GM12878 (cell line): ENCODE measurements at regions of chr17 and their contacts with region 1.

Region 1: DNA sequence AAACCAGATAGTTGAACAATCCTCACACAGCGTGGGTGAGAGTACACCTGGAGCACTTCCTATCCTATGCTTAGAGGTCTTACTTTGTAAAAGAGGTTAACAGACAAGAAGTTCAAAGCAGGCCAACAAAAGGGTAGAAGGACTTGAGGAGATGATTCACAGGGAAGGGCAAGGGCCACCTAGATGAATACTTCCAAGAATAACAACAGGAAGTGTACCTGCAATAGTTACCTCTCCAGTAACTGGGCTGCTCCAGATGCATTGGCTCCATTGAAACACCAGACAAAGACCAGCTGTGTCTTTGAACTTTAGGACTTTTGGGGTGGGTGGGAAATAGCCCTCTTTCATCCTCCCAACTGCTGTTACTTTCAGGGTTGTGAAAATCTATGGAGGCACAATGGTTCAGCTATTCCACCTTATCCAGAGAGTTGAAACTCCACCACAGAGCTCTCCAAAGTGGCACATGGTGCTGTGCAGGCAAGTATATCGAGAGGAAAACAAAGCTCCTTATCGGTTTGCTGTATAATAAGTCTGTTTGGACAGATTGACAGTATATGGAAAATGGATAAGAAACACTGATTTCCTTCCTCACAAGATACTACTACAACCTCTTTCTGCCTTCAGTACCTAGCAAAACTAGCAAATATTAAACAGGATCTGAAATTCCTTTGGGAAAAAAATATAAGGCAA is 22.7 kb downstream of the RNF43 start:
- DNase-seq: no peak
- ATAC-seq: no peak
- H3K4me3 ChIP-seq: no peak overlapping the region
- H3K27ac ChIP-seq: no peak overlapping the region
- H3K4me1 ChIP-seq: no peaks in the 10 kb centered on the region
- H3K27me3 ChIP-seq: no peaks in the 10 kb centered on the region
- CTCF ChIP-seq: no peak
- EP300 ChIP-seq: no peak
- POLR2A ChIP-seq: no peak
- RAD21 ChIP-seq: no peak

Region 2: DNA sequence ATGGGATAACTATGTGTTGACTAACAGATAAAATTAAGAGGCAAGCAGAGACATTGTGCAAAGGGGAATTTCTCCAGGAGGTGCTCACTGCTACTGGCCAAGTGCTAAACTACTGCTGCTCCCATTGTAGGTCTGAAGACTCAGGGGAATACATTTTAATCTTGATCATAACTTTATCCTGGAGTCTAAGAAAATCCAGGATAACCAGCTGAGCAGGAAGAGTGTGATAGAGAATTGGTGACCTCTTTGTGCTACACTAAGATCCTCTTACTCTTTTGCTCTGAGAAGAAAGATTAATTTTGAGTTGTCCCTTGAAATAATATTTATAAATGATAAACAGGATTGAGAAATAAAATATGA is 16.7 kb after region 1 on chr17:
- CTCF ChIA-PET with region 1: interaction called, 4 read pairs
- POLR2A ChIA-PET with region 1: interaction called, 8 read pairs
- RAD21 ChIA-PET with region 1: interaction called, 4 read pairs
- SMC1A ChIA-PET with region 1: interaction called, 14 read pairs
- in situ Hi-C with region 1: no loop called
- intact Hi-C with region 1: no loop called
- DNase-seq: no peak
- ATAC-seq: peak; percentile 11; the same call in 2 of the 3 replicates
- H3K4me3 ChIP-seq: peak overlapping the region; percentile 57
- H3K27ac ChIP-seq: peak overlapping the region; percentile 48
- H3K4me1 ChIP-seq: no peaks in the 10 kb centered on the region
- H3K27me3 ChIP-seq: no peaks in the 10 kb centered on the region; a peak in 1 of 4 replicates
- CTCF ChIP-seq: no peak
- EP300 ChIP-seq: no peak
- POLR2A ChIP-seq: no peak
- RAD21 ChIP-seq: no peak

Region 3: GRCh38 chr17:58541249-58541648 is 146.6 kb after region 1 on chr17:
- CTCF ChIA-PET with region 1: no interaction called
- POLR2A ChIA-PET with region 1: no interaction called
- RAD21 ChIA-PET with region 1: no interaction called
- SMC1A ChIA-PET with region 1: no interaction called
- in situ Hi-C with region 1: no loop called
- intact Hi-C with region 1: no loop called
- DNase-seq: no peak
- ATAC-seq: peak; percentile 88
- H3K4me3 ChIP-seq: no peak overlapping the region
- H3K27ac ChIP-seq: no peak overlapping the region
- H3K4me1 ChIP-seq: no peaks in the 10 kb centered on the region
- H3K27me3 ChIP-seq: no peaks in the 10 kb centered on the region; a peak in 1 of 4 replicates
- CTCF ChIP-seq: peak; percentile 41 to 59 (median 47)
- EP300 ChIP-seq: no peak
- POLR2A ChIP-seq: no peak
- RAD21 ChIP-seq: peak; percentile 49